ENCODE measurements at regions of chr5 and their contacts with region 1.

Region 1: GRCh38 chr5:103145196-103145595 is 25.1 kb downstream of the PPIP5K2 start:
- DNase-seq: no peak
- ATAC-seq: no peak

Region 2: GRCh38 chr5:103031607-103032006 is 113.6 kb before region 1 on chr5:
- intact Hi-C with region 1: loop called (anchors 10 kb)
- DNase-seq: no peak
- ATAC-seq: no peak

Measured in Right ventricle myocardium inferior (tissue), 1 donor.